ENCODE measurements at regions of chrX and their contacts with region 1.

Region 1: DNA sequence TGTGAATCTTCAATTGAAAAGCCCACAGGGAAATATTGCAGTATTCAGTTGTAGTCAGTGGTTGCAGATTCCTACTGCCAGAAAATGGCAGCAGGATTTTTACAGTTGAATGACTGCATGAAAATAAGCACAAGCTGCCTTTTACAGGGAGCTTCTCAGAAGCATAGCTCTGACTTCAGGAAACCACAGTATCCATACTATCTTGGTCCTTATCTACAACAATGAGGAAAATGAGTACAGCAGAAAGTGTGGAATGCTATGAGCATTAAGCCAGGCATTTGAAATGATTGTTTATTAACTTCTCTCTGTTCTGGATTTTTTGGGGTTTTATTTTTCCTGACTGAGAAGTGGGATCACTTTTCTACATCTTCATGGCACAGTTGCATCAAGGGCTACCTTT is 34.6 kb upstream of the PRRG1 start:
- DNase-seq: peak in 1 of 2 experiments; percentile 65
- H3K4me3 ChIP-seq: no peak overlapping the region
- H3K27ac ChIP-seq: peak overlapping the region; percentile 72
- H3K4me1 ChIP-seq: peaks cover 39% of the 10 kb centered on the region
- H3K27me3 ChIP-seq: no peaks in the 10 kb centered on the region
- CTCF ChIP-seq: no peak

Region 2: DNA sequence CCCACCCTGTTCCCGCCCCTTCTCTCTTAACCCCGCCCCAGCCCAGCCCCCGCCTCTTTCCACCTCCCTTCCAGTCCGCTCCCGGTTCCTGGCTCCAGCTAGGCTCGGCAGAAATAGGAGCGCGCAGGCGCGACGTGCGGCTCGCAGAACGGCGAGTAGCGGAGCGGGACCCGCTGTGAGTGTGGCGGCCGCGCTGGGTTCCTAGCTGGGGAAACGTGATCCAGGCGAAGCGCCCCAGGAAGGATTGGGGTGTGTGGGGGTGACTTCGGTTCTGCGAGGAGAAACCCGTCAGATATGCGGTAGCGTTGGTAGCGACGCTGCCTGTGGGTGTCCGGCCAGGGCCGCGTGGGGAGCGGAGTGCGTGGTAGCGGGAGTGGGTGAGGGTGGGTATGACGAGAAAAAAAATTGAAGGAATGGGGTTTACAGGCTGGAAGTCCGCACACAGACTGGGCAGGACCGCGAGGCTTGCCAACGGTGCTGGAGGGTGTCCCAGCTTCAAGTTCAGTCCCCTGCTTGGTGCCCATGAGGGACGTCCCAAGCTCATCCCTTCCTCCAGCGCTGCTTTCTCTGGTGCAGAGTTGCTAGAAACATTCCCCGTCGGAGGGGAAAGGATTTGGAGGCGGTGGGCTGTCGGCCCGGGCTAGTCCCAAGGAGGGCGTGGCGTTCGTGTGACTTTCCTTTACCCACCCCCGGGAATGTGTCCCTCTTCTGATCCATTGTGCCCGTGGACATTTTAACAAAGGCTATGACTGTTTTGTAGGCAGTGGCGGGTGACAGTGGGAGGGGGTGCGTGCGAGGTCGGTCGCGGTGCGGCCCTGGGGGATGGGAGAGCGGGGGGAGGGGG is 34.9 kb after region 1 on chrX and contains the start of gene PRRG1:
- CTCF ChIA-PET with region 1: no interaction called
- POLR2A ChIA-PET with region 1: interaction called, 25 read pairs
- intact Hi-C with region 1: loop called (anchors 1 kb)
- DNase-seq: peak; percentile 69 to 83
- H3K4me3 ChIP-seq: peak within 1 kb of the TSS; percentile 79
- H3K27ac ChIP-seq: peak within 1 kb of the TSS; percentile 59
- H3K4me1 ChIP-seq: peaks cover 33% of the 10 kb centered on the region
- H3K27me3 ChIP-seq: no peaks in the 10 kb centered on the region
- CTCF ChIP-seq: no peak
- total RNA-seq, gene PRRG1: 23.5 and 34.4 TPM in 2 replicates

Region 3: DNA sequence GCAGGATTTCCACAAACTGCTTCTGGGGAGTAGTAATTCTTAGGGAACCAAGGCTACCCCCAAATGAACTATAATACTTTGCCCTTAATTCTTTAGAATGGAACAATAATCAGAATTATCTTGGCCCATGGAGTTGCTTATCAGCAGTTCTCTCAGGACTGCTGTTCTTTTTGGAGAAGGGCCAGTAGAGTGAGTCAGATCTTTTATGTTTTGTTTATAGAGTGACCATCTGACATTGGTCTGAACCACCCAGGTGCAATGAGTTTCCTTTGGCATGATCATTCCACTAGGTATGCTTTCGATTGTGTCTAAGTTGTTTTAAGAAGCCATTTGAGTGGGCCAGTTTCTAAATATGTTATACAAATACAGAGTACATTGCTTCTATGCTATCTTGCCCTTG is 66.4 kb after region 1 on chrX:
- CTCF ChIA-PET with region 1: no interaction called
- POLR2A ChIA-PET with region 1: no interaction called
- intact Hi-C with region 1: loop called (anchors 2 kb)
- DNase-seq: peak; percentile 16 to 74
- H3K4me3 ChIP-seq: no peak overlapping the region
- H3K27ac ChIP-seq: 0 out of 2 replicates have a peak overlapping the region, but pooled peaks have one; percentile 8
- H3K4me1 ChIP-seq: peaks cover 17% of the 10 kb centered on the region
- H3K27me3 ChIP-seq: no peaks in the 10 kb centered on the region
- CTCF ChIP-seq: no peak

Region 4: GRCh38 chrX:37454537-37455285 is 140.2 kb after region 1 on chrX:
- CTCF ChIA-PET with region 1: no interaction called
- POLR2A ChIA-PET with region 1: no interaction called
- intact Hi-C with region 1: loop called (anchors 2 kb)
- DNase-seq: peak; percentile 57 to 74
- H3K4me3 ChIP-seq: no peak overlapping the region
- H3K27ac ChIP-seq: peak overlapping the region; percentile 52
- H3K4me1 ChIP-seq: peaks cover 24% of the 10 kb centered on the region
- H3K27me3 ChIP-seq: no peaks in the 10 kb centered on the region
- CTCF ChIP-seq: no peak

Region 5: GRCh38 chrX:38080808-38081207 is 766.3 kb after region 1 on chrX:
- CTCF ChIA-PET with region 1: no interaction called
- POLR2A ChIA-PET with region 1: no interaction called
- intact Hi-C with region 1: no loop called
- DNase-seq: no peak
- H3K4me3 ChIP-seq: no peak overlapping the region
- H3K27ac ChIP-seq: no peak overlapping the region
- H3K4me1 ChIP-seq: no peaks in the 10 kb centered on the region
- H3K27me3 ChIP-seq: no peaks in the 10 kb centered on the region
- CTCF ChIP-seq: no peak

Measured in PC-9 (cell line).